ENCODE measurements at regions of chr19 and their contacts with region 1.

Region 1: GRCh38 chr19:36214386-36215275 is at the starts of genes ZNF146 and ZNF565:
- DNase-seq: peak; percentile 90 to 99 (median 94)
- ATAC-seq: peak; percentile 84
- H3K4me3 ChIP-seq: peak within 1 kb of the TSS; percentile 86
- H3K4me3 Mint-ChIP-seq: no peak within 1 kb of the TSS
- H3K27ac ChIP-seq: peak within 1 kb of the TSS; percentile 93 to 99
- H3K27ac Mint-ChIP-seq: no peak within 1 kb of the TSS
- H3K4me1 ChIP-seq: peaks cover 28% of the 10 kb centered on the region
- H3K4me1 Mint-ChIP-seq: peaks cover 17% of the 10 kb centered on the region
- H3K27me3 ChIP-seq: no peaks in the 10 kb centered on the region
- H3K27me3 Mint-ChIP-seq: no peaks in the 10 kb centered on the region
- CTCF ChIP-seq: no peak
- total RNA-seq, gene ZNF146: 13.6 to 13.7 TPM
- total RNA-seq, gene ZNF565: 7.6 to 8.5 TPM

Region 2: DNA sequence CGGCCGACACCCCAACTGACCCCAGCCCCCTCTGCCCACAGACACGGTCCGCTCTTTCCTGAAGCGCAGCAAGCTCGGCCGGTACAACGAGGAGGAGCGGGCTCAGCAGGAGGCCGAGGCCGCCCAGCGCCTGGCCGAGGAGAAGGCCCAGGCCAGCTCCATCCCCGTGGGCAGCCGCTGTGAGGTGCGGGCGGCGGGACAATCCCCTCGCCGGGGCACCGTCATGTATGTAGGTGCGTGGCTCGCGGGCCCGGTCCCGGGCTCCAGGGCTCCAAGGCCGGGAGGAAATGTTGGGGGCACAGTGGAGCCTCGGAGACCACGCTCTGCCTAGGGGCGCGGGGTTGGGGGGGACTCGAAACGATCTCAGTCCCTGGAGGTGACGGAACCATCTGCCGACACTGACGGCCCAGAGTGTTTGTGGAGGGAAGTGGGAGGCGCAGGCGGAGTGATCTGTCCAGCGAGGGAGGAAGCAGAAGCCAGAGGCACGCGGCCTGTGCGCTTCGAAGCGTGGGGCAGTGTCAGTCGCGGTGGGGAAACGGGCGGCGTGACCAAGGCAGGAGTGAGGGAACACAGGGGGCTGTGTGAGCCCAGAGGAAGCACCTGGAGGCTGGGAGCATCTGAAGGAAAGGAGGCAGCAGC is 93.0 kb before region 1 on chr19:
- CTCF ChIA-PET with region 1: no interaction called
- POLR2A ChIA-PET with region 1: no interaction called
- intact Hi-C with region 1: no loop called
- DNase-seq: no peak
- ATAC-seq: no peak
- H3K4me3 ChIP-seq: no peak overlapping the region
- H3K4me3 Mint-ChIP-seq: no peak overlapping the region
- H3K27ac ChIP-seq: no peak overlapping the region
- H3K27ac Mint-ChIP-seq: no peak overlapping the region
- H3K4me1 ChIP-seq: peaks cover 9% of the 10 kb centered on the region
- H3K4me1 Mint-ChIP-seq: peaks cover 16% of the 10 kb centered on the region
- H3K27me3 ChIP-seq: no peaks in the 10 kb centered on the region
- H3K27me3 Mint-ChIP-seq: no peaks in the 10 kb centered on the region
- CTCF ChIP-seq: no peak

Region 3: GRCh38 chr19:36132489-36132891 is 82.1 kb before region 1 on chr19:
- CTCF ChIA-PET with region 1: interaction called, 3 read pairs
- POLR2A ChIA-PET with region 1: interaction called, 13 read pairs
- intact Hi-C with region 1: no loop called
- DNase-seq: peak in 7 of 14 experiments; percentile 19 to 62 (median 47)
- ATAC-seq: no peak
- H3K4me3 ChIP-seq: no peak overlapping the region
- H3K4me3 Mint-ChIP-seq: no peak overlapping the region
- H3K27ac ChIP-seq: no peak overlapping the region
- H3K27ac Mint-ChIP-seq: no peak overlapping the region
- H3K4me1 ChIP-seq: peaks cover 39% of the 10 kb centered on the region
- H3K4me1 Mint-ChIP-seq: peaks cover 21% of the 10 kb centered on the region
- H3K27me3 ChIP-seq: no peaks in the 10 kb centered on the region
- H3K27me3 Mint-ChIP-seq: no peaks in the 10 kb centered on the region
- CTCF ChIP-seq: no peak

Region 4: DNA sequence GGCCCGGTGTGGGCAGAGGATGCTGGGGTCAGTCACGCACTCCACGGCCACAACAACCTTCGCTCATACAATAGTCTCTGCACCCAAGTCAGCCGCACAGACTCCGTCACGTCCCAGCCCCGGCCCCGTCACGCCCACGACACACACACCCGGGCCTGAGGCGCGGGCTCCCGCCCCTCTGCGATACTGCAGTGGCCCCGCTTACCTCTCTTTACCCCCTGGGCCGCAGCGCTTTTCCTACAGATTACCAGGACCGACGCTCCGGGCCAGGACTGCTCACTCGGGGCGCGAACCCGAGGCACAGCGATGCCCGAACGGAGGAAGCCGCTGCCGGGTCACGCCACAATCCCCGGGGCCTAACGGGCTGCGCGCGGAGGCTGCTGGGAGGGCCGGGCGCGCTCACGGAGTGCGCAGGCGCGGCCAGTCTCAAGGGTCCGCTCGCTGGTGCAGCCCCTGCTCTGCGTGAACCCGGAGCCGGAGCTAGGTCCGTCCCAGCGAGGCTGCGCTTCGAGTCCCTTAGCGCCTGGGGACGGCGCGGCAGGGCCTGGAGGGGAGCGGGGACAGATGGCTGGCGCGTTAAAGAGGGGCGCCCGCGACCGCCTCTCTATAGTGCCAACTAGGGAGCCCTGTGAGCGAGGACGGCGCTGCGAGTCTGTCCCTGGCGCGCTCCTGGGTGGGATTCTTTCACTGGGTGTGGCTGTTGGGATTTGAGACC is 203.8 kb after region 1 on chr19 and contains the start of gene ZFP82:
- CTCF ChIA-PET with region 1: no interaction called
- POLR2A ChIA-PET with region 1: interaction called, 6 read pairs
- intact Hi-C with region 1: loop called in 1 of 2 experiments (anchors 2 kb)
- DNase-seq: peak; percentile 54 to 86 (median 70)
- ATAC-seq: peak; percentile 86
- H3K4me3 ChIP-seq: peak within 1 kb of the TSS; percentile 93
- H3K4me3 Mint-ChIP-seq: peak within 1 kb of the TSS; percentile 95
- H3K27ac ChIP-seq: peak within 1 kb of the TSS; percentile 51 to 78
- H3K27ac Mint-ChIP-seq: peak within 1 kb of the TSS; percentile 93
- H3K4me1 ChIP-seq: peaks cover 19% of the 10 kb centered on the region
- H3K4me1 Mint-ChIP-seq: peaks cover 27% of the 10 kb centered on the region
- H3K27me3 ChIP-seq: peaks cover 16 to 23% of the 10 kb centered on the region in 2 experiments
- H3K27me3 Mint-ChIP-seq: peaks cover 29% of the 10 kb centered on the region
- CTCF ChIP-seq: no peak
- total RNA-seq, gene ZFP82: 3.4 to 3.8 TPM

Region 5: DNA sequence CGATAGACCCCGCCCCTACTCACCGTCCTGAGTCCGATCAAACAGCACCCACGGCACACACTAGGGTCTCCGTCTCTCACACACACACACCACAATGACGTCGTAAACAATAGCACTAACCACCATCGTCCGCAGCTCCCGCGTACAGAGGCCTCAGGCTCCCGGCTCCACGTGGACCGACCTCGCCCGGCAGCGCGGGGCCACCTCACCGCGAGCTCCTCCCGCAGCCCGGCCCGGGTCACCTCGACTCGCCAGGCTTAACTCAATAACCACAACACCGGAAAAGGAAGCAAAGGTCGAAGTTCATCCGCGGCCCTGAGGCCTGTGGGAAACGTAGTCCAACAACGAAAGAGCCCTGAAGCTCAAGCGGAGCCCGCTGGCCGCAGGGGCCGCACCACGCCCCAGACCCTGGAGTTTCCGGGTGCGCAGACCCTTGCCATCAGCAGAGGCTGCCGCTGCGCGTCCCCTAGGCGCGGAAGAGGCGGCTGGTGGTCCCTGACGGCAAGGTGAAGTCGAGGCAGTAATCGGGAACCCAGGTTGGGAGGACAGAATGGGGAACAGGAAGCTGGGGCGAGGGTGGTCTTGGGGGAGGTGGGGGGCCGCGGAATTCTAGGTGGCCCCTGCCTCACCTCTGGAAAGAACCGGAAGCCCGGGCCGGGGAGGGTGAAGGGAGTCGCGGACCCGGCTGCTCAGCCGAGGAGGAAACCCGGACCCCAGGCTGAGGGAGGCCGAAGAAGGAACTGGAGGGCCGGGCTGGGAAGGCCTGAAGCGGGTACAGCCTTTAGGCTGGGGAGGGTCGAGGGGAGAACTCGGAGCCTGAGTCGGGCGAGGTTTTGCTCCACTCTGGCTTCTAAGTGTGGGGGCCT is 358.6 kb after region 1 on chr19 and contains the start of gene ZNF529:
- CTCF ChIA-PET with region 1: no interaction called
- POLR2A ChIA-PET with region 1: interaction called, 10 read pairs
- intact Hi-C with region 1: no loop called
- DNase-seq: peak; percentile 69 to 94 (median 78)
- ATAC-seq: peak; percentile 92
- H3K4me3 ChIP-seq: peak within 1 kb of the TSS; percentile 88
- H3K4me3 Mint-ChIP-seq: peak within 1 kb of the TSS; percentile 94
- H3K27ac ChIP-seq: peak within 1 kb of the TSS; percentile 89 to 97
- H3K27ac Mint-ChIP-seq: peak within 1 kb of the TSS; percentile 93
- H3K4me1 ChIP-seq: peaks cover 25% of the 10 kb centered on the region
- H3K4me1 Mint-ChIP-seq: peaks cover 39% of the 10 kb centered on the region
- H3K27me3 ChIP-seq: no peaks in the 10 kb centered on the region
- H3K27me3 Mint-ChIP-seq: no peaks in the 10 kb centered on the region
- CTCF ChIP-seq: no peak
- total RNA-seq, gene ZNF529: 39.6 to 42.7 TPM

Region 6: DNA sequence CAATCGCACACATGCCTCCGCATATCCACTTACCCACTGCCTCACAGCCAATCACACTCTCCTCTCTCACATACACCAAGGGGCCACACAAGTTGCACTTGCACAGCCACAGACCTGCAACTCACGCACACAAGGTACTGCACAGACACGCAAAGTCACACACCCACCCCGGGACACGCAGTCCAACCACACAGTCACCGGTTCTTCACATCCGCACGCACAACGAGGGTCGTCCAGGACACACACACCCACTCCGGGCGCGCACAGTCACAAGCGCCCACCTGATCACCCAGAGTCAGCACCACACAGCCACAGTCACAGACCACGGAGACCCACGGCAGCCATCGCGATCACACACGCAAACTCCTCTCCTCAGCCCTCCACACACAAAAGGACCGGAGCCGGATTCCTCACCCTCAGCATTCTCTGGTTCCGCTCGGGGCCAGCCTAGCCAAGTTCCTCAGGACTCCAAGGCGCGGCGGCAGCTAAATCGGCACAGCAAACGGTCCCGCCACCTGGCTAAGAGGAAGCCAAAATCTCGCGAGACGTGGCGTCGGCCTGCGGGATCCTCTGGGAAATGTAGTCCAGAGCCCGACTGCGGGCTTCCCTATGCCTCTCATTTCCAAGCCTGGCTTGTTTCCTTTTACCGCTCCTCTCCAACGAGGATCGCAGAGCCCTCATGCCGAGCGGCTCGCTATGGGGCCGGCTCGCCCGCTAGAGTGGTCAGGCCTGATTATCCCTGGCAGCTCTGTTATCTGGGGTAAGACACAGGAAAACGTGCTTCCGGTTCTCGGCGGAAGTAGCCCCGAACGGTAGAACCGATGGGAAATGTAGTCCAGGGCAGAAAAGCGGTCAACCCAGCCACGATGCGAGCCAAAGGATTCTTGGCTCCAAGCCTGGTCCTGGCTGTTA is 557.9 kb after region 1 on chr19 and contains the start of gene ZNF850:
- CTCF ChIA-PET with region 1: no interaction called
- POLR2A ChIA-PET with region 1: interaction called, 4 read pairs
- intact Hi-C with region 1: loop called in 1 of 2 experiments (anchors 10 kb)
- DNase-seq: peak; percentile 87 to 96 (median 93)
- ATAC-seq: peak; percentile 94
- H3K4me3 ChIP-seq: peak within 1 kb of the TSS; percentile 91
- H3K4me3 Mint-ChIP-seq: peak within 1 kb of the TSS; percentile 95
- H3K27ac ChIP-seq: peak within 1 kb of the TSS; percentile 78 to 94
- H3K27ac Mint-ChIP-seq: peak within 1 kb of the TSS; percentile 84
- H3K4me1 ChIP-seq: peaks cover 20% of the 10 kb centered on the region
- H3K4me1 Mint-ChIP-seq: peaks cover 20% of the 10 kb centered on the region
- H3K27me3 ChIP-seq: no peaks in the 10 kb centered on the region
- H3K27me3 Mint-ChIP-seq: no peaks in the 10 kb centered on the region
- CTCF ChIP-seq: no peak
- total RNA-seq, gene ZNF850: 0.77 to 2.1 TPM

Region 7: GRCh38 chr19:37370880-37371661 is 1156.4 kb after region 1 on chr19 and contains the start of gene ZNF527:
- CTCF ChIA-PET with region 1: no interaction called
- POLR2A ChIA-PET with region 1: no interaction called
- intact Hi-C with region 1: loop called in 1 of 2 experiments (anchors 5 kb)
- DNase-seq: peak; percentile 93 to 98 (median 96)
- ATAC-seq: peak; percentile 96
- H3K4me3 ChIP-seq: peak within 1 kb of the TSS; percentile 59
- H3K4me3 Mint-ChIP-seq: peak within 1 kb of the TSS; percentile 96
- H3K27ac ChIP-seq: peak within 1 kb of the TSS; percentile 76 to 85
- H3K27ac Mint-ChIP-seq: peak within 1 kb of the TSS; percentile 96
- H3K4me1 ChIP-seq: peaks cover 17% of the 10 kb centered on the region
- H3K4me1 Mint-ChIP-seq: peaks cover 16% of the 10 kb centered on the region
- H3K27me3 ChIP-seq: no peaks in the 10 kb centered on the region
- H3K27me3 Mint-ChIP-seq: no peaks in the 10 kb centered on the region
- CTCF ChIP-seq: no peak
- total RNA-seq, gene ZNF527: 7.8 to 8.4 TPM

Measured in CD4-positive, alpha-beta T cell (primary cell).